Right ventricle myocardium superior (tissue), 1 donor: ENCODE measurements at regions of chr11 and their contacts with region 1.

Region 1: GRCh38 chr11:13105237-13105844 is 96.2 kb downstream of the RASSF10 start:
- DNase-seq: peak; percentile 44
- ATAC-seq: no peak

Region 2: DNA sequence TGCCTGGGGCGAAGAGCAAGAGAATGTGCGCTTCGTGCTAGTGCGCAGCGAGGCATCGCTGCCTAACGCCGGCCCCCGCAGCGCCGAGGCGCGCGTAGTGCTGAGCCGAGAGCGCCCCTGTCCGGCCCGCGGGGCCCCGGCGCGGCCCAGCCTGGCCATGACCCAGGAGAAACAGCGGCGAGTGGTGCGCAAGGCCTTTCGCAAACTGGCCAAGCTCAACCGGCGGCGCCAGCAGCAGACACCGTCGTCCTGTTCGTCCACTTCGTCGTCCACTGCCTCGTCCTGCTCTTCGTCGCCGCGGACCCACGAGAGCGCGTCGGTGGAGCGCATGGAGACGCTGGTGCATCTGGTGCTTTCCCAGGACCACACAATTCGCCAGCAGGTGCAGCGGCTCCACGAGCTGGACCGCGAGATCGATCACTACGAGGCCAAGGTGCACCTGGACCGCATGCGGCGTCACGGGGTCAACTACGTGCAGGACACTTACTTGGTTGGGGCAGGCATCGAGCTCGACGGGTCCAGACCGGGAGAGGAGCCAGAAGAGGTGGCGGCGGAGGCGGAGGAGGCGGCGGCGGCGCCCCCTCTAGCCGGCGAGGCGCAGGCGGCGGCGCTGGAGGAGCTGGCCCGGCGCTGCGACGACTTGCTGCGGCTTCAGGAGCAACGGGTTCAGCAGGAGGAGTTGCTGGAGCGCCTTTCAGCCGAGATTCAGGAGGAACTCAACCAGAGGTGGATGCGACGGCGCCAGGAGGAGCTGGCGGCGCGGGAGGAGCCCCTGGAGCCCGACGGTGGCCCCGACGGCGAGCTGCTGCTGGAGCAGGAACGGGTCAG is 95.2 kb before region 1 on chr11:
- intact Hi-C with region 1: loop called (anchors 10 kb)
- DNase-seq: peak; percentile 43
- ATAC-seq: no peak